ENCODE measurements at regions of chr10 and their contacts with region 1.

Region 1: GRCh38 chr10:12960334-12960898 is 41.1 kb downstream of the CCDC3 start:
- DNase-seq: no peak
- H3K4me3 ChIP-seq: no peak overlapping the region
- H3K27ac ChIP-seq: no peak overlapping the region
- H3K4me1 ChIP-seq: no peaks in the 10 kb centered on the region
- H3K27me3 ChIP-seq: no peaks in the 10 kb centered on the region
- CTCF ChIP-seq: no peak

Region 2: GRCh38 chr10:13001041-13001886 is 40.8 kb after region 1 on chr10 and contains the start of gene CCDC3:
- CTCF ChIA-PET with region 1: no interaction called
- dilution Hi-C with region 1: loop called (anchors 5 kb)
- in situ Hi-C with region 1: no loop called
- intact Hi-C with region 1: no loop called
- DNase-seq: no peak
- H3K4me3 ChIP-seq: peak within 1 kb of the TSS in 2 of 3 experiments; percentile 34 to 38
- H3K27ac ChIP-seq: no peak within 1 kb of the TSS
- H3K4me1 ChIP-seq: no peaks in the 10 kb centered on the region
- H3K27me3 ChIP-seq: peaks cover 9% of the 10 kb centered on the region
- CTCF ChIP-seq: no peak
- total RNA-seq, gene CCDC3: 3.7 to 7.7 TPM

Measured in mammary epithelial cell (primary cell).